SK-N-SH (cell line): ENCODE measurements at regions of chr1 and their contacts with region 1.

Region 1: DNA sequence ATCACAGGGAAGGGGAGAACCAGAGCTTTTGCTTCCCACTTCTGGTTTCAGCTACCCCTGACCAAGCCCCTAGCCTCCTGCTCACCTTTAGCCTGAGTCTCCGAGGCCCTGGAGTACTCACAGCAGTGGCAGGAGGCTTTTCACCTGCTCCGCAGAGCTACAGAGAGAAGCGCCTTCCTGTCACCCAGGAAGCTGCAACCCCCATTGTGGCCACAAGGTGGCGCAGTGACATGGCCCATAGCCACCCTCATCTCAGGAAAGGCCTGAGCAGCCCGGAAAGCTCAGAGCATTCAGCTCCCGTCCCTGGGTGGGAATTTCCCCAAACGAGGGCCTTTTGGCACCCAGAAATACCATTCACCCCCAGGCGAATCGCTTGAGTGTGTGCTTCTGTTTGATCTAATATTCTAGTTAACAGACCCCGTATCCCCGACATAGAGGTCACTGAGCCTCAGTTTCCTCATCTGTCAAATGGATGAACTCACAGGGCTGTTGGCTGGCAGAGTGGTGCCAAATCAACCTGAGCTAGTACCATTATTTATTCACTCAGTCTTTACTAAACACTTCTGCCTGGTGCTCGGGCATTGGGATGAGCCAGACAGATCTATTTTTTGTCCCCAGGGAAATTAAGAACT is 25.3 kb downstream of the A3GALT2 start:
- DNase-seq: peak; percentile 89
- H3K4me3 ChIP-seq: no peak overlapping the region
- H3K27ac ChIP-seq: no peak overlapping the region; a peak in 1 of 4 replicates
- H3K4me1 ChIP-seq: no peaks in the 10 kb centered on the region
- H3K27me3 ChIP-seq: no peaks in the 10 kb centered on the region
- CTCF ChIP-seq: peak; percentile 93
- EP300 ChIP-seq: no peak
- RAD21 ChIP-seq: peak; percentile 81

Region 2: DNA sequence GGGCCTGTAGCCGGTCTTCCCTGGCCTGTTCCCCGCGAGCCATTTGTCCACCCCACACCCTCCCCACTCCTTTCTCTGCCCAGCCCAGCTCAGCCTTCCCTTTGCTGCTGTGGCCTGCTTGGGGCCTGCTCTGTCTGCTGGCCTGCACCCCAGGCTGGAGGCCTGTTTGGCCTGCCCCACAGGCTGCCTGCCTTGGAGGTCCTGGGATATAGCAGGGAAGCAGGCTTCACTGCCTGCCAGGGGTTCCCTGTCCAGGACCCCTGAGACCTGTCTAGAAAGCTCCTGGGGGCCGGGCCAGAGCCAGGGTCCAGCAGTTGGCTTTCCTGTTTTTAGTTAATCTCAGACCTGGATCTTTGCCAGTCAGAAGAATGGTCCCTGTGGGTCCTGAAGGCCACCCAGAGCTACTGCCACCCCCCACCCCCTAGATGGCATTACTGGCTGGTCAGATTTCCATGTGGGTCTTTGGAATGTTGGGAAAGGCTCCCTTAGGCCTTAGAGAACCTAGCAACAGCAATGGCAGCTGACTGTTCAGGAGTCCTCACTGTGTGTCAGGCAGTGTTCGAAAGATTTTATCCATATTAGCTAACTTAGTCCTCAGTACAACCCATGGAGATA is 31.6 kb before region 1 on chr1:
- CTCF ChIA-PET with region 1: interaction called, 11 read pairs
- POLR2A ChIA-PET with region 1: no interaction called
- DNase-seq: no peak
- H3K4me3 ChIP-seq: no peak overlapping the region
- H3K27ac ChIP-seq: peak overlapping the region in 1 of 2 experiments; percentile 59; a peak in 1 of 4 replicates
- H3K4me1 ChIP-seq: peaks cover 3 to 40% of the 10 kb centered on the region in 2 experiments; a peak in 2 of 4 replicates
- H3K27me3 ChIP-seq: no peaks in the 10 kb centered on the region
- CTCF ChIP-seq: no peak
- EP300 ChIP-seq: no peak
- RAD21 ChIP-seq: no peak

Region 3: DNA sequence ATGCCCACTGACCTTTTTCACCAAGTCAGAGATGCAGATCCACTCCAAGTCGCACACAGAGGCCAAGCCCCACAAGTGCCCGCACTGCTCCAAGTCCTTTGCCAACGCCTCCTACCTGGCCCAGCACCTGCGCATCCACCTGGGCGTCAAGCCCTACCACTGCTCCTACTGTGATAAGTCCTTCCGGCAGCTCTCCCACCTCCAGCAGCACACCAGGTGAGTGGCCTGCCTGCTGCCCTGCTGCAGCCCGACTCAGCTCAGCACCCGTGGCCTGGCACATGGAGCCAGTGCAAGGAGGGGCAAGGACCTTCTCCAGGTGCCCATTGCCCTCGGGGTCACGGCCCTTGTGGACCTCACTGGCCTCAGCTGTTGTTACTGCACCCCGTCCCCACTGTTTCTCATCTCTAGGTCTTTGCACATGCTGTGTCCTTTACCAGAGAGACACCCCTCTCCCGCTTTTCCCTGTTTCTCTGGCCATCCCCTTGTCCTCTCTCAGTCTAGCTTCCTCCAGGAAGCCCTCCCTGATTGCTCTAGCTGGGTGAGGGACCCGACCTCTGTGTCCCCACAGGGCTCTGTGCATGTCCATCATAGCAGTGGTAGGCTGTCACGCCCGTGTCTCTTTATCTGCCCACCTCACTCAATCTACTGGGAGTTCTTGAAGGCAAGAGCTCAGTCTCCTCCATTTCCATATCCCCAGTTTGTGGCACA is 13.8 kb before region 1 on chr1:
- CTCF ChIA-PET with region 1: interaction called, 14 read pairs
- POLR2A ChIA-PET with region 1: no interaction called
- DNase-seq: no peak
- H3K4me3 ChIP-seq: no peak overlapping the region
- H3K27ac ChIP-seq: no peak overlapping the region
- H3K4me1 ChIP-seq: peaks cover 0 to 9% of the 10 kb centered on the region in 2 experiments; a peak in 2 of 4 replicates
- H3K27me3 ChIP-seq: no peaks in the 10 kb centered on the region
- CTCF ChIP-seq: no peak
- EP300 ChIP-seq: no peak
- RAD21 ChIP-seq: no peak

Region 4: DNA sequence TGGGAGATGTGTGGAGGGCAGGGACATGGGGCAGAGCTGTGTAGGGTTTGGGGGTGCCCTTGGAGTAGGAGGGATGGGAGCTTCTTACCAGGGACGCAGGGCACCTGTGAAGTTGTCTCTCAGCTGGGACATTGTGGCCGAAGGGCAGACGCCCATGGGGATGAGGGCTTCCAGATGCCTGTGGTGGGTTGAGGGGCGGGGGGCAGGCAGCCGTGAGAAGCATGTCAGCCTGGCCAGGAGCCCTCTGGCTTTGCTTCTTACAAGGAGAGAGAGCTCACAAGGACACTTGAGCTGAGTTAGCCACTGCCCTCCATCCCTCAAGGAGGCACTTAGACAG is 16.8 kb after region 1 on chr1:
- CTCF ChIA-PET with region 1: interaction called, 16 read pairs
- POLR2A ChIA-PET with region 1: no interaction called
- DNase-seq: no peak
- H3K4me3 ChIP-seq: no peak overlapping the region
- H3K27ac ChIP-seq: no peak overlapping the region
- H3K4me1 ChIP-seq: no peaks in the 10 kb centered on the region
- H3K27me3 ChIP-seq: no peaks in the 10 kb centered on the region
- CTCF ChIP-seq: no peak
- EP300 ChIP-seq: no peak
- RAD21 ChIP-seq: no peak

Region 5: DNA sequence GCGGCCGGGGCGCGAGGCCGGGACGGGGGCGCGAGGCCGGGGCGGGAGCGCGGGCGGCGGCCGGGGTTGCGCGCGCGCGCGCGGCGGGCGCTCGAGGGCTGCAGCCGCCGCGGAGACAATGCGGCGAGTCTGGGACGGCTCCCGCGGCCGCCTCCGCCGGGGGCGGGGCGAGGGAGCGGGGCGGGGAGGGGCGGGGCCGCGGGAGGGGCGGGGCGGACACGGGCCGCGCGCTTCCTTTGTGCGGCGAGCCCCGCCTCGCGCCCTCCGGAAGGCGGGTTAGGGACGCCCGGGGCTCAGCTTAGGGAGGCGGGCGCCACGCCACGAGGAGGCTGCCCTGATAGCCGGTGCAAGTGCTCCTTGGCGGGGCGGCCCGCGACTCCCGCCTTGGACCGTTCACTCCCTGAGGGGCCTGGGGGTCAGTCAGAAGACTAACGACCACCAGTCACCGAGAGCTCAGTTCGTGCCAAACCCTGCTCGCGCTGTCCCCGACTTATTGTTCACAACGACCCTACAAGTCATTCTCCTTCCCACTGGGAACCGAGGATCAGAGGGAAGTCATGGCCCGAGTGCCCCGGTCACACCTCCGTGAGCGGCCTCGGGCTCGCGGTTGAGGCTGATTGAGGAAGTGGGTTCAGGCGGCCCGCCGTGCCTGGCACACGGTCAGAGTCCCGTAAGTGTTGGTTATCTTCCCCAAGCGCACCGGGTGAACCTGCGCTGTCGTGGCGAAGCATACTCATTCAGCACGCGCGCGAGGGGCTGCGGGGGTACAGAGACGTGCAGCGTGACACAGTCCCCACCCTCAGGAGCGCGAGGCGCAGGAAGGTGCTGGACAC is 54.4 kb after region 1 on chr1:
- CTCF ChIA-PET with region 1: interaction called, 10 read pairs
- POLR2A ChIA-PET with region 1: interaction called, 3 read pairs
- DNase-seq: peak; percentile 98
- H3K4me3 ChIP-seq: peak overlapping the region; percentile 62 to 78
- H3K27ac ChIP-seq: peak overlapping the region; percentile 75 to 94
- H3K4me1 ChIP-seq: peaks cover 21 to 35% of the 10 kb centered on the region in 2 experiments
- H3K27me3 ChIP-seq: no peaks in the 10 kb centered on the region
- CTCF ChIP-seq: no peak
- EP300 ChIP-seq: no peak
- RAD21 ChIP-seq: no peak

Region 6: DNA sequence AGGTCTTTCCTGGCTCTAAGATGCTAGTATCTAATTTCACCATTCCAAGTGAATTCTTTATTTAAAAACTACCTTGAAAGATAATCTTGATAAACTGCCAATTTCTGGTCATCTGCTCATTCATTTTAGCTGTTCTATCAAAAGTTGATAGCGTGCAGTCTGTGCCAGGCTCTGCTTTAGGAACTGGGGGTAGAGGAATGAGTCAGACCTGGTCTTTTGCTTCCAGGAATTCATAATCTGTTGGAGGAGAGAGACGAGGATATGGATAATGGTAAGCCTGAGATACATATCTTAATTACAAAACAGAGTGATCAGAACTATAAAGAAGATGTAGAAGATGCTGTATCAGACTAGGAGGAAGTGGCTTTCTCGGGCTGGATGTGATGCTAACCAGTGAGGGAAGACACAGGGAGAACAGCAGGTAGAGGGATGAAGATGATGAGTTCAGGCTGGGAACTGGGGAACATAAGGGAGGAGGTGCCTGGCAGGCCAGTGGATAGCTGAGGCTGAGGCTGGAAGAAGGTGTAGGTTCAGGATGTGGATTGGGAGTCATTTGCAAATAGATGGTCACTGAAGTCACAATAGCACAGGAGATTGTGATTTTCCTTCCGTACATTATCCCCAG is 147.6 kb after region 1 on chr1:
- CTCF ChIA-PET with region 1: interaction called, 10 read pairs
- POLR2A ChIA-PET with region 1: no interaction called
- DNase-seq: no peak
- H3K4me3 ChIP-seq: no peak overlapping the region
- H3K27ac ChIP-seq: peak overlapping the region; percentile 66 to 89
- H3K4me1 ChIP-seq: peaks cover 10 to 21% of the 10 kb centered on the region in 2 experiments; a peak in 3 of 4 replicates
- H3K27me3 ChIP-seq: no peaks in the 10 kb centered on the region
- CTCF ChIP-seq: no peak
- EP300 ChIP-seq: peak in 1 of 2 experiments; percentile 65; a peak in 1 of 4 replicates
- RAD21 ChIP-seq: no peak

Region 7: DNA sequence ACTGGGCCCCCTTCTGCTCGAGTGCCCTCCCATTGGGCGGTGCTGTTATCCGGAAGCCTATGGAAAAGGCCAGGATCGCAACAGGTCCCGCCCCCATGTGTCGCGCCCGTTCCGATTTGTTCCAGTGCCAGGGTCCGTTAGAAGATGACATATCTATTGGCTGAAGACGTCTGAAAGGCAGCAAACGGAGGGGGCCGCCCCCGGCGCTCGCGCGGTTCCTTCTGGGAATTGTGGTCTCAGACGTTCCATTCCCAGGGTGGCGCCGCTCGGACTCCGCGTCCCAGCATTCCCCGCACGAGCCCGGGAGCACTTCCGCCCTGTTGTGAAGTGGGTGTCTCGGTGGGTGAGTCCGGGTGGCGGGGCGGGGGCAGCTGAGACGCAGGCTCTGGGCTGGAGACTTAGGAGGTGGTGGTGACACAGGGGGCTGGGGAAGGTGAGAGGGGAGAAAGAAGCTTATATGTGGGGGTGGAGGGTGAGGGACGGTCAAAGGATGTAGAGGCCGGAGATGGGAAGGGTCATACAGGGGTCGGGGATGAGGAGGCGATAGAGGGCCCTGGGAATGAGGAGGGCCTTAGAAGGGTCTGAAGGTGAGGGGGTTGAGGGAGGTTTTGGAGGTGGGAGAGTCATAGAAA is 176.9 kb after region 1 on chr1 and contains the start of gene ZSCAN20:
- CTCF ChIA-PET with region 1: interaction called, 107 read pairs
- POLR2A ChIA-PET with region 1: no interaction called
- DNase-seq: peak; percentile 90
- H3K4me3 ChIP-seq: peak within 1 kb of the TSS; percentile 73 to 80
- H3K27ac ChIP-seq: peak within 1 kb of the TSS; percentile 74 to 79; a peak in 3 of 4 replicates
- H3K4me1 ChIP-seq: peaks cover 18 to 26% of the 10 kb centered on the region in 2 experiments
- H3K27me3 ChIP-seq: no peaks in the 10 kb centered on the region
- CTCF ChIP-seq: no peak
- EP300 ChIP-seq: no peak
- RAD21 ChIP-seq: no peak
- polyA plus RNA-seq, gene ZSCAN20: 2.1 TPM in 2 replicates